ENCODE measurements at regions of chr10 and their contacts with region 1.

Region 1: DNA sequence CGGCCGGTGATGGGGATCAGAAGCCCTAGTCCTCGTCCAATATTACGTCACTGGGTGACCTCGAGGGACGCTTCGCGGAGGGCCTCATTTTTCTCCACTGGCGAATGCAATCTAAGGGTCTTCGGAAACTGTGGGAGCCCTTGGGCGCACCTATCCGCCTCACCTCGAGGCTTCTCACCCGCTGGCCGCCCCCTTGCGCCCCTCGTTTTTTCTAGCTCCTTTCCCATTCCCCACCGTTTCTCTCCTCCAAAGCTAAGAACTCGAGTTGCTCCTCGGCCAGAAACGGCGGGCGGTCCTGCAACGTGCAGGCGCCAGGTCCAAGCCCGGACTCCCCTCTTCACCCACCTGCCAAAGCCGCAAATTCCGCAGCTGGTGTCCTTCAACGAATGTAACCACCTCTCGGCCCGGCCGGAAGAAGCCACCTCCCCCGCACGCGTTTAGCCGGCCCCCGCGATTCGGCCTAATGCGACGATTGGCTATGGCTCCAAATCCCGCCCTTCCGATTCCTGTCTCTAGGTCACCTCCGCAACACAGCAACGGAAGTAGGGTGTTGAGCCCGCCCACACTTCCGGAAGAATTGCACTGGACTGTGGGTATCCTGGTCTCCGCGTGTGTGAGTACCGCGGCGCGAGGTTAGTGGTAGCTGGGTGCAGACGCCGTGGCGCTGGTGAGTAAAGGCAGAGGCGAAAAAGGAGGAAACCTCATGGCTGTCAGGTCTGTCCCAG is at the starts of genes ATP5MK and PDCD11:
- DNase-seq: peak; percentile 85 to 91
- H3K4me3 ChIP-seq: peak within 1 kb of the TSS; percentile 96 to 99 (median 96)
- H3K27ac ChIP-seq: peak within 1 kb of the TSS; percentile 37
- H3K4me1 ChIP-seq: peaks cover 0 to 10% (median 2%) of the 10 kb centered on the region in 4 experiments; a peak in 6 of 7 replicates
- H3K27me3 ChIP-seq: no peaks in the 10 kb centered on the region
- CTCF ChIP-seq: peak in 1 of 3 experiments; percentile 17; a peak in 1 of 4 replicates
- EP300 ChIP-seq: no peak
- POLR2A ChIP-seq: peak; percentile 66 to 81
- RAD21 ChIP-seq: no peak
- total RNA-seq, gene ATP5MK: 312 and 339 TPM in 2 replicates
- total RNA-seq, gene PDCD11: 78.5 and 79.1 TPM in 2 replicates

Region 2: DNA sequence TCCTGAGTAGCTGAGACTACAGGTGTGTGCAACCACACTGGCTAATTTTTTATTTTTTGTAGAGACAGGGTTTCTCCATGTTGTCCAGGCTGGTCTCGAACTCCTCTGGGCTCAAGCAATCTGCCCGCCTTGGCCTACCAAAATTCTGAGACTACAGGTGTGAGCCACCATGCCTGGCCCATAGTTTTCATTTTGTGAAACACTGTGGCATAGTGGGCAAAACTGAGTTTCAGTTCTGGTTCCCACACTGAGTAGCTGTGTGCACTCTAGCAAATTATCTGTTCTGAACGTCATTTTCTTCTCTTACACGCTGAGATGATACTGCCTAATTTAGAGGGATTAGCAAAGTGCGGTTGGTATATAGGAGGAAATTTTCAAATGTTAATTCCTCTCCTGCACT is 13.5 kb before region 1 on chr10:
- CTCF ChIA-PET with region 1: interaction called, 4 read pairs
- POLR2A ChIA-PET with region 1: interaction called, 13 read pairs
- DNase-seq: no peak
- H3K4me3 ChIP-seq: no peak overlapping the region
- H3K27ac ChIP-seq: no peak overlapping the region
- H3K4me1 ChIP-seq: no peaks in the 10 kb centered on the region
- H3K27me3 ChIP-seq: no peaks in the 10 kb centered on the region
- CTCF ChIP-seq: no peak
- EP300 ChIP-seq: no peak
- POLR2A ChIP-seq: no peak
- RAD21 ChIP-seq: no peak

Region 3: DNA sequence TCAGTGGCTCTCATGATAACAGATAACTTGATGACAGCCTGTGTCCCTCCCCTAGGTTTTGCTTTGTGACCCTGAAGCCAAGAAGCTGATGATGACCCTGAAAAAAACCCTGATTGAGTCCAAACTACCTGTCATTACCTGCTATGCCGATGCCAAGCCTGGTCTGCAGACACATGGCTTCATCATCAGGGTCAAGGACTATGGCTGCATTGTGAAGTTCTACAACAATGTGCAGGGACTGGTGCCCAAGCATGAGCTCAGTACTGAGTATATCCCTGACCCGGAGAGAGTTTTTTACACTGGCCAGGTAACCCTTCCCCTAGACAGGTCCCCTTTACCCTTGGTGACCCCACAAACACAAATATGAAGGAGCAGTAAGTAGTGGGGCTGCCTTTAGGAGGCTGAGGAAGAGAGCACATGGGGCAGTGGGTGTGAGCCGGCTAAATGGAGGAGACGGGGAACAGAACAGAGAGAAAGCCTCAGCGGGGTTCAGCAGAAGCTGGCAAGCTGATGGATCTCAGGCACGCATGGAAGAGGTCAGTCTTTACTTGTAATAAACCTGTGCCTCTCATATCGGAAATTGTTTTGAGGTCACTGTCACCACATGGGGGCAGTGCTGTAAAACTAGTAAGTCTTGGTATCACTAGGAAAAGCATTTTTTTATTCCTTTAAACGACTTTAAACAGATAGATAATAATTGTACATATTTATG is 20.4 kb after region 1 on chr10:
- CTCF ChIA-PET with region 1: interaction called, 12 read pairs
- POLR2A ChIA-PET with region 1: interaction called, 4 read pairs
- DNase-seq: no peak
- H3K4me3 ChIP-seq: no peak overlapping the region
- H3K27ac ChIP-seq: no peak overlapping the region
- H3K4me1 ChIP-seq: no peaks in the 10 kb centered on the region
- H3K27me3 ChIP-seq: no peaks in the 10 kb centered on the region
- CTCF ChIP-seq: peak in 2 of 3 experiments; percentile 27 to 44; a peak in 2 of 4 replicates
- EP300 ChIP-seq: no peak
- POLR2A ChIP-seq: no peak
- RAD21 ChIP-seq: peak; percentile 45 to 51

Region 4: GRCh38 chr10:103504181-103504783 is 108.1 kb after region 1 on chr10:
- CTCF ChIA-PET with region 1: no interaction called
- POLR2A ChIA-PET with region 1: no interaction called
- DNase-seq: no peak
- H3K4me3 ChIP-seq: no peak overlapping the region
- H3K27ac ChIP-seq: no peak overlapping the region
- H3K4me1 ChIP-seq: no peaks in the 10 kb centered on the region; a peak in 2 of 7 replicates
- H3K27me3 ChIP-seq: no peaks in the 10 kb centered on the region
- CTCF ChIP-seq: no peak
- EP300 ChIP-seq: no peak
- POLR2A ChIP-seq: no peak
- RAD21 ChIP-seq: no peak

Measured in H1 (cell line).